Dorsolateral prefrontal cortex (tissue), 120 donors: ENCODE measurements at regions of chr3 and their contacts with region 1.

Region 1: DNA sequence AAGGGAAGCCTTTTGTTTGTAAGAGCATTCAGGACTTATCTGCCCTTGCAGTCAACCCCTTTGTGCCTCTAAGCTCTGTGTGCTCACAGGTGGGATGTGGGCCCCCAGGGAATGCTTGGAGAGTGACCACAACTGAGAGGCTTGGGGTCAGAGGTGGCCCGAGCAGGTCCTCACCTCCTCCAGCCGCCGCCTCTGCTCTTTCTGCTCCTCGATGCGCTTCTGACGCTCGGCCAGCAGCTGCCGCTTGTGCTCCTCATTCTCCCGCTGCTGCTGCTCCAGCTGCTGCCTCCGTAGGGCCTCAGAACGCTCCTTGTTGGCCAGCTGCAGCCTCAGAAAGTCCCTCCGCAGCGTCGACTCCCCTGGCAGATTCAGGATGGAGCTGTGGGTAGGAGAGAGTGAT is 130.8 kb upstream of the SLC2A2 start:
- DNase-seq: peak in 9 of 10 donors; percentile 48 to 77 (median 66)
- H3K4me3 ChIP-seq: no peak overlapping the region
- H3K27ac ChIP-seq: peak overlapping the region; percentile 27 to 98 (median 92)
- H3K27me3 ChIP-seq: no peaks in the 10 kb centered on the region
- CTCF ChIP-seq: peak in 37 of 56 donors; percentile 9 to 56 (median 29)

Region 2: DNA sequence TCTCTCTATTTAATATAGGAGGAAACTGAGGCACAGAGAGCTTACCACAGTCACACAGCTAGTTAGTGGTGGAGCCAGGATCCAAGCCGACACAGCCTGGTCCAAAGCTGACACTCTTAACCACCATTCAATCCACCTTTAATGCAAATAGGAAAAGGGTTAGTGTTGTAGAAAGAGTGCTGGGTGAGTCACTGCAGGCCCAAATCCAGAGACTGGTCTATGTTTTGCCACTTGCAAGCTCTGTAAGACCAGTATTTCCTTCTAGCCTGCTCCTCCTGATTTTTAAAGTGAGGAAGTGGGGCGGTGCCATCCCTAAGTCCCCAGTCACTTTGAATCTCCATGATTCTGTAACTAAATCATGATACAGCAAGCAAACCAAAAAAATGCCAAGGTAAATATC is 1604.8 kb before region 1 on chr3:
- intact Hi-C with region 1: no loop called
- DNase-seq: no peak
- H3K4me3 ChIP-seq: no peak overlapping the region
- H3K27ac ChIP-seq: no peak overlapping the region
- H3K27me3 ChIP-seq: peaks cover 0 to 2% (median 0%) of the 10 kb centered on the region in 45 donors
- CTCF ChIP-seq: no peak

Region 3: GRCh38 chr3:171172070-171172469 is 14.8 kb after region 1 on chr3:
- intact Hi-C with region 1: loop called in 1 of 2 experiments (anchors 2 kb)
- DNase-seq: no peak
- H3K4me3 ChIP-seq: no peak overlapping the region
- H3K27ac ChIP-seq: peak overlapping the region in 15 of 59 donors; percentile 9 to 96 (median 91)
- H3K27me3 ChIP-seq: no peaks in the 10 kb centered on the region
- CTCF ChIP-seq: peak in 14 of 56 donors; percentile 6 to 34 (median 19)